Cardiac septum (tissue), 1 donor: ENCODE measurements at regions of chr11 and their contacts with region 1.

Region 1: DNA sequence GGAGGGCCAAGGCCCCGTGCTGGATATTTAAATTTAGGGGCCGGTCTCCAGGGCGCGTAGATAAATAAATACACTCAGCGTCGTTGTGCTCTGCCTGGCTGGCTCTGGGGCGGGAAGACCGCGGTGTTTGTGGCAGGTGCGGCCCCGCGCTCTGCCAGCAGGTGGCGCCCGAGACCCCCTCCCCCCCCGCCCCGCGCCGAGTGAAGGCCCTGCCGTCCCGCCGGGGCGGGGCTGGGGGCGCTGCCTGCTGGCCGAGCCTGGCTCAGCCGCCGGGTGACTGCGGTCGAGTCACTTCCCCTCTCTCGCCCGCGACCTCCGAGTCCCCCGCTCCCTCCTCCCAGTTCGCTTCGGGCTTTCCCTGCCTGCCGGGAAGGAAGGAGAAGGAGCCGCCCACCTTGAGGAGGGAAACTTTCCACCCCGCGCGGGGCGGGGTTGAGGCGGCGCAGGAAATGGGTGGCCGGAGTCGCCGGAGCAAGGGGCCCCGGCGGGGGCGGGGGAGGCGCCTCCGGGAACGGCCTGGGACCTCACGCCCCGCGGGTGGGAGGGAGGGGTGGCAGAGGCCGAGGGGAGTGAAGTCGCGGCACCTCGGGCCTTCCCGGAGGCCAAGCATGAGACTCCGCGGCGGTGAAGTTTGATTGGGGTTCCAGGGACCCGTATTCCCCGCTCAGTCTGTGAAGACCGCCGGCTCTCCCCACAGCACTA is 1.6 kb upstream of the EHBP1L1 start:
- DNase-seq: peak; percentile 98

Region 2: DNA sequence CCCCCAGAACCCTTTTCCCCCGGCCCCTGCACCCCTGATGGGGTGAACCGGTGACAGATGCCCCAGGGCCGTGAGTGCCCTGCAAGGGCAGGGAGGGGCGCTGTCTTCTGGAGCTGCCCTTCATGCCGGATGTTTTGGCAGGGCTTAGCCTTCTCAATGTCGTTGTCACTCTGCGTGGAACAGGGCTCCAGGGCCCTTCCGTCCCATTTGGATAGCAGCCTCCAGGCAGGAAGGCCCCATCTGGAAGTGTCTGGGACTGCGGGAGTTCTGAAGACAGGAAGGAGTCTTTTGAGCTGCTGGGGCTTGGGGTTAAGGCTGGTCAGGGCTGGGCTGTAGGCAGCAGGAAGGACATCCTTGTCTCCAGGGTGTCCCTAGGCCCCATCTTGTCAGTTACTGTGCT is 183.3 kb before region 1 on chr11:
- intact Hi-C with region 1: no loop called
- DNase-seq: no peak

Region 3: GRCh38 chr11:65477149-65477965 is 96.9 kb before region 1 on chr11:
- intact Hi-C with region 1: no loop called
- DNase-seq: peak; percentile 99

Region 4: DNA sequence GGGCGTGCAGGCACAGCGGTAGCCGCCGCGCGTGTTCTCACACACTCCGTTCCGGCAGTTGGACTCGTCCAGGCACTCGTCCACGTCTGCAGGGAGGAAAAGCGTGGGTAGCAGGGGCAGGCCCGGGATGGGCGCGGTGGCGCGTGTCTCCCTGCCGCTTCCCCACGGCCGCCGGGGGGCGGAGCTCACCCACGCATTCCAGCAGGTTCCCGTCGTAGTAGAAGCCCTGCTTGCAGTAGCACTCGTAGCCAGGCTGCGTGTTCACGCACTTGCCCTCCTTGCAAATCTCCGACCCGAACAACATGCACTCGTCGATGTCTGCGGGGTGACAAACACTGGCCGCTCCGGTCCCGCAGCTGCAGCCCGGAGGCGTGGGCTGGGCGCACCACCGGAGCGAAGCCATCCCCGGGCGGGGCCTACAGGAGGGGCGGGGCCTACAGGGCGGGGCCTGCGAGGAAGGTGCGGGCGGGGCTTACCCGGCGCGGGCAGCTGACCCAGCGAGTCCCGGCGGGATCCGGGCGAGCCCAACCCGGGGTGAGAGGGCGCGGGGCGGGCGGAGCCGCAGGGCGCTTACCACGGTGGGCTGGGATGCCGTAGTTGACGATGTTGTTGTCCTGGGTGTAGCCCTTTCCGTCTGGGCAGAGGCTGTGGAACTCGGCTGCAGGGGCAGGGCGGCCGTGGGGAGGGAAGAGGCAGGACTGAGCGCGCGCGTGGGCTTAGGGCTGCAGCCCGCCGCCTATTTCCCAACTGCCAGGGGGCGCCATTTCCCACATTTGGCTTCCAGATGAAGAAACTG is 33.8 kb before region 1 on chr11:
- intact Hi-C with region 1: loop called (anchors 2 kb)
- DNase-seq: peak; percentile 97

Region 5: GRCh38 chr11:65558002-65558931 is 16.0 kb before region 1 on chr11 and contains the start of gene LTBP3:
- intact Hi-C with region 1: loop called (anchors 2 kb)
- DNase-seq: peak; percentile 84
- total RNA-seq, gene LTBP3: 148 TPM

Region 6: DNA sequence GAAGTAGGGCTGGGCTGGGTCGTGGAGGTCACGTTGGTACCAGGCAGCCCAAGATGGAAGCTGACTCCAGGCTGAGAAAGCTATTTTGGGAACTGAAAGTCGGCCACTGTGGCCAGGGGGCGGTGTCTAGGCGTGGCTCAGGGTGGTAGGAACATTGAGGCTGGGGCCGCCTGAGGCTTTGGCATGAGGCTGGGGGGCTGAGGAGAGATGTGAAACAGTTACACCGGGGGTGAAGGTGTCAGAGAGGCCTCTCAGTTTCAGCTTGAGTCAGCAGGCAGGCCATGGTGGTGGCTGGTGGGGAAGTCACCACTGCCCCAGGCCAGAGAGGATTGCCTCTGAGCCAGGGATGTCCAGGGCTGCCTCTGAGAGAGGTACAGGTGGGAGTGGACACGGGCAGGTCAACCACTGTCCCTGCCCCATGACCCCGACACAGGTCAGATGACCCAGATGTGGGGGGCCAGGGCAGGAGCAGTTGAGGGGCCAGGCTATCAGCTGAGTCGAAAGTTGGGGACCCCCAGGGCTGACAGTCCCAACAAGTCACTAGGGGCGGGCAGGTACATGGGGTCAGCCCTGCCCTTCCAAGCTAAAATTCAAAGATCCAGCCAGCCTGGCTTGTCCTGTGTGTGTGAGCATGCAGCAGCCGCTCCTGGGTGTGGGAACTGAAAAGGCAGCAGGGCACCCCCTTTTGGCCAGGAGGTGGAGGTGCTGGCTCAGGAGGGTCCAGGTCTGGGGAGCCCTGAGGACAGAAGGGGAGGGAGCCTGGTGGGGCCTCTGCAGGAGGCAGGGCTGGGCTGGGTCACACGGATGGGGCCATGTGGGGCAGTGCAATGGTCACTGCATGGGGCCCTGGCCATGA is 14.2 kb after region 1 on chr11:
- intact Hi-C with region 1: loop called (anchors 2 kb)
- DNase-seq: no peak

Region 7: GRCh38 chr11:65599216-65599954 is 25.1 kb after region 1 on chr11:
- intact Hi-C with region 1: no loop called
- DNase-seq: no peak

Region 8: GRCh38 chr11:65615229-65615941 is 41.1 kb after region 1 on chr11 and contains the start of gene PCNX3:
- intact Hi-C with region 1: loop called (anchors 1 kb)
- DNase-seq: peak; percentile 100
- total RNA-seq, gene PCNX3: 15.9 TPM